ENCODE measurements at regions of chr18 and their contacts with region 1.

Region 1: DNA sequence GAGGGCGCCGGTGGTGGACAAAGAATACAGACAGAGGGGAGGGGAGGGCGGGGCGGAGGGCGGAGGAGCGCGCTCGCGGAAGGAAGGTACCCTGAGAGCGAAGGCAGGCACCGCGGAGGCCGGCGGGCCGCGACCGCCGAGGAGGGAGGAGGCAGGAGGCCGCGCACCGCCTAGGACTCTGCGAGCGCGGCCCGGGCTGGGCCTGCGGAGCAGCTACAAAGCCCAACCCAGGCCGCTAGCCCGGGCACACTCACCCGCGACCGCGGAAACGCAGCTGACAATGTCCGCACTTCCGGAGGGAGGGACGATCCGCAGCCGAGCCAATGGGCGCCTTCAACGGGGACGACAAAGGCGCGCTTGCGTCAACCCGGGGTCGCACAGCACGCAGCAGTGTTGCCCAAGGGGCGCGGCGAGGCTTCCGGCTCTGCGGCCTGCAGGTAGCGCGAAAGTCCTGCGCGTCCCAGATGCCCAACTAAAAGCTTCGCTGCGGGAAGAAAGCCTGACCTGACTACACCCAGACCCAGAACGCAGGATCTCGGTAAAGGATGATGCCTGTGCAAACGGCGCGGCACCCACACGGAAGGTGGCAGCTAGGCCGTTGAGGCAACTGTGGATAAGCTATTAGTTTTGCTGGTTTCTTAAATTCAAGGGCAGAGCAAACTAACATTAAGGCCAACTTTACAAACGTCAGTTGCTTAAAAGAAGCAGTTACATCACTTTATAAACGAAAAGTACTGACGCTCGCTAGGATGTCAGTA is at the start of gene C18orf32:
- DNase-seq: peak; percentile 92
- H3K4me3 Mint-ChIP-seq: peak within 1 kb of the TSS; percentile 93
- H3K27ac Mint-ChIP-seq: peak within 1 kb of the TSS; percentile 98
- H3K4me1 Mint-ChIP-seq: peaks cover 53% of the 10 kb centered on the region
- H3K27me3 Mint-ChIP-seq: no peaks in the 10 kb centered on the region
- total RNA-seq, gene C18orf32: 28.7 and 31.2 TPM in 2 replicates

Region 2: GRCh38 chr18:49476664-49477411 is 10.3 kb before region 1 on chr18:
- intact Hi-C with region 1: loop called (anchors 1 kb)
- DNase-seq: no peak
- H3K4me3 Mint-ChIP-seq: no peak overlapping the region
- H3K27ac Mint-ChIP-seq: peak overlapping the region; percentile 48
- H3K4me1 Mint-ChIP-seq: peaks cover 17% of the 10 kb centered on the region
- H3K27me3 Mint-ChIP-seq: peaks cover 5% of the 10 kb centered on the region

Region 3: GRCh38 chr18:50374753-50375391 is 887.7 kb after region 1 on chr18 and contains the start of gene SKA1:
- intact Hi-C with region 1: loop called (anchors 10 kb)
- DNase-seq: peak; percentile 89
- H3K4me3 Mint-ChIP-seq: peak within 1 kb of the TSS; percentile 91
- H3K27ac Mint-ChIP-seq: peak within 1 kb of the TSS; percentile 81
- H3K4me1 Mint-ChIP-seq: peaks cover 23% of the 10 kb centered on the region
- H3K27me3 Mint-ChIP-seq: peaks cover 2% of the 10 kb centered on the region
- total RNA-seq, gene SKA1: 20.7 and 23.3 TPM in 2 replicates

Measured in activated T-helper 1 cell treated with anti-CD3 and anti-CD28 coated beads, Interleukin-12 subunit alpha, Interleukin-12 subunit beta, Interleukin-2, Interleukin-4 antibody, amounts not matched to agents 30 ng/mL and 10 ng/mL and 1 ng/mL, durations not matched to agents 14 hours and 24 hours and 36 hours (primary cell).